Heart right ventricle (tissue), 16 donors: ENCODE measurements at regions of chr15 and their contacts with region 1.

Region 1: DNA sequence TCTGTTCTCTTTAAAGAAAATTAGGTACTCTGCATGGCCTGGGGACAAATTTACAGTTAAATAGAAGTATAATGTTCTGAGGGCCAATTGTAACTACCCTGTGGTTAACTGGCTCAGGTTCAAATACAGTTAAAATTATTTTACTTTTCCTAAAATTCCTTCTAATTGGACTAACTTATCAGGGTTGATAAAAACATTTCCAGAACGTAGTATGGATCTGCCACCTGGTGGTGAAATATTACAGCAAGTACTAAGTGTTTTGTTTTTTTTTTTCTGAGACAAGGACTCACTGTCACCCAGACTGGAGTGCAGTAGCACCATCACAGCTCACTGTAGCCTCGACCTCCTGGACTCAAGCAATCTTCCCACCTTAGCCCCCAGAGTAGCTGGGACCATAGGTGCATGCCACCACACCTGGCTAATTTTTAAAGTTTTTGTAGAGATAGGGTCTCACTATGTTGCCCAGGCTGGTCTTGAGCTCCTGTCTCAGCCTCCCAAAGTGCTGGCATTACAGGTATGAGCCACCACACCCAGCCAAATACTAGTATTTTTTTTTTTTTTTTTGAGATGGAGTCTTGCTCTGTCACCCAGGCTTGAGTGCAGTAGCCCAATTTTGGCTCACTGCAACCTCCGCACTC is 29.2 kb downstream of the NEO1 start:
- DNase-seq: peak in 1 of 2 donors; percentile 50
- ATAC-seq: peak in 2 of 8 donors; percentile 46 to 58
- H3K4me3 ChIP-seq: no peak overlapping the region
- H3K27ac ChIP-seq: no peak overlapping the region
- H3K4me1 ChIP-seq: peaks cover 0 to 16% (median 14%) of the 10 kb centered on the region in 9 donors
- H3K27me3 ChIP-seq: peaks cover 0 to 24% (median 14%) of the 10 kb centered on the region in 7 donors
- CTCF ChIP-seq: peak; percentile 50 to 85 (median 73)

Region 2: DNA sequence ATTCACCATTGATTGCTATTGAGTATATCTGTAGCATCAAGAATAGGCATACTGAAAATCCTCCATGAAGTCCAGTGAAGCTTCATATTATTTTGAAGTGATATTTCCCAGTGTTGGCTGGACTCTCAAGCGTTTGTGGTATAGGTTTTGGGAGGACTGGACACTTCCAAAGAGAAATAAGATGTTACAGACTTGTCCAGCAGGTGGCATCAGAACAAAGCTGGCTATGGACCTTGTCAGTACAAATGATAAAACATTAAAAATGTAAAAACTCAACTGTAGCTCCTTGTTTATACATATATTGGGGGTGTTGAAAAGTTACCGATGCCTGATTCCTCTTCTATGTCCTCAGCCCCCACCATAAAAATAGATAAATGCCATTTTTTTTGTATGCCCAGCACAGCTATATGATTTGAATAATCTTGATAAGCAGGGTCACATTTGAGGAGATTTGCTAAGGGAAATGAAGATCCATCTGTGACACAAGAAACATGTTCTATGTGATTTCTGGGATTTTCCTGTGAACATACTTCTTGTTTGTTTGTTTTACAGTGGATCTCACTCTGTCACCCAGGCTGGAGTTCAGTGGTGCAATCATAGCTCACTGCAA is 481.5 kb before region 1 on chr15:
- intact Hi-C with region 1: loop called in 1 of 10 experiments (anchors 10 kb)
- DNase-seq: peak in 1 of 2 donors; percentile 32
- ATAC-seq: no peak
- H3K4me3 ChIP-seq: no peak overlapping the region
- H3K27ac ChIP-seq: no peak overlapping the region
- H3K4me1 ChIP-seq: no peaks in the 10 kb centered on the region
- H3K27me3 ChIP-seq: no peaks in the 10 kb centered on the region
- CTCF ChIP-seq: peak; percentile 43 to 75 (median 67)

Region 3: GRCh38 chr15:72722071-72722696 is 359.3 kb before region 1 on chr15:
- intact Hi-C with region 1: loop called in 6 of 10 experiments (anchors 5 to 10 kb)
- DNase-seq: peak; percentile 24 to 54
- ATAC-seq: peak in 1 of 8 donors; percentile 31
- H3K4me3 ChIP-seq: no peak overlapping the region
- H3K27ac ChIP-seq: no peak overlapping the region
- H3K4me1 ChIP-seq: no peaks in the 10 kb centered on the region
- H3K27me3 ChIP-seq: no peaks in the 10 kb centered on the region
- CTCF ChIP-seq: peak; percentile 40 to 81 (median 67)

Region 4: DNA sequence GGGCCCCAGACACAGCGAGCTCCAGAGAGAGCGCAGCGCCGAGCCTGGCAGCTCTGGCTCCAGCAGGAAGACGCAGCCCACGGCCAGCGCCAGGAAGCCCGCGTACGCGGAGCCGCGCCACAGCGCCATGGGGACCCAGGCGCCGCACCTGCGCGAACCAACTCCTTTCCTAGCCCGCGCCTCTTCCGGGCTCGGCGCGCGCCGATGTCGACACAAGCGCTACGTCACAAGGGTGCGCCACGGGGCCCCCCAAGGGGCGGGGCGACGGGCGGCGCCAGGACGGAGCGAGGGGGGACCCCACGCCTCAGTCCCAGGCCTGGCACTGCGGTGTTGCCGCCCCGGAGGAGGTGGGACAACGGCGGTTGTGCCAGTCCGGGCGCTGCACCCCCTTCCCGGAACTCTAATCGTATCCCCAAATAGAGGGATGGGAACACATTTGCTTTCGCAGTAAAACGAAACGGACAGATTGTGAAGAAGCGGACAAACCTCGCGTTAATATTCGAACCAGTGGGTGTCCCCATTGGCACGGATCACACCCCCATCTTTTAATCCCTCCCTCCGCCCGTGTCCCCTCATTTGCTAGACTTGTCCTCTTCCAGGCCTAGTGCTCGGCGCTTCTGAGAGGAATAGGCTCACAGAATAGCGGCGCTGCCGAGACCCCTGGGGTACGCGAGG is 297.7 kb before region 1 on chr15 and contains the start of gene ADPGK:
- intact Hi-C with region 1: loop called in 6 of 10 experiments (anchors 2 to 5 kb)
- DNase-seq: peak; percentile 88 to 92
- ATAC-seq: peak; percentile 96 to 99 (median 98)
- H3K4me3 ChIP-seq: peak within 1 kb of the TSS; percentile 63 to 100 (median 92)
- H3K27ac ChIP-seq: peak within 1 kb of the TSS; percentile 77 to 99 (median 94)
- H3K4me1 ChIP-seq: peaks cover 0 to 43% (median 24%) of the 10 kb centered on the region in 9 donors
- H3K27me3 ChIP-seq: no peaks in the 10 kb centered on the region
- CTCF ChIP-seq: no peak
- total RNA-seq, gene ADPGK: 6.4 to 21.8 (median 10.4) TPM

Region 5: GRCh38 chr15:72796515-72797337 is 284.7 kb before region 1 on chr15:
- intact Hi-C with region 1: loop called (anchors 1 to 5 kb)
- DNase-seq: peak; percentile 26 to 54
- ATAC-seq: peak; percentile 79 to 94 (median 90)
- H3K4me3 ChIP-seq: peak overlapping the region; percentile 32 to 63 (median 54)
- H3K27ac ChIP-seq: peak overlapping the region in 1 of 10 donors; percentile 9
- H3K4me1 ChIP-seq: peaks cover 0 to 17% (median 8%) of the 10 kb centered on the region in 9 donors
- H3K27me3 ChIP-seq: peaks cover 0 to 71% (median 55%) of the 10 kb centered on the region in 7 donors
- CTCF ChIP-seq: peak; percentile 40 to 77 (median 57)